Dorsolateral prefrontal cortex (tissue), 120 donors: ENCODE measurements at regions of chr3 and their contacts with region 1.

Region 1: GRCh38 chr3:180989291-180990163 is at the start of gene DNAJC19:
- DNase-seq: peak; percentile 78 to 96 (median 94)
- H3K4me3 ChIP-seq: peak within 1 kb of the TSS; percentile 49 to 98 (median 88)
- H3K27ac ChIP-seq: peak within 1 kb of the TSS; percentile 13 to 95 (median 86)
- H3K27me3 ChIP-seq: no peaks in the 10 kb centered on the region
- CTCF ChIP-seq: peak in 27 of 56 donors; percentile 6 to 57 (median 17)
- total RNA-seq, gene DNAJC19: 26.3 to 63.9 (median 46.2) TPM

Region 2: DNA sequence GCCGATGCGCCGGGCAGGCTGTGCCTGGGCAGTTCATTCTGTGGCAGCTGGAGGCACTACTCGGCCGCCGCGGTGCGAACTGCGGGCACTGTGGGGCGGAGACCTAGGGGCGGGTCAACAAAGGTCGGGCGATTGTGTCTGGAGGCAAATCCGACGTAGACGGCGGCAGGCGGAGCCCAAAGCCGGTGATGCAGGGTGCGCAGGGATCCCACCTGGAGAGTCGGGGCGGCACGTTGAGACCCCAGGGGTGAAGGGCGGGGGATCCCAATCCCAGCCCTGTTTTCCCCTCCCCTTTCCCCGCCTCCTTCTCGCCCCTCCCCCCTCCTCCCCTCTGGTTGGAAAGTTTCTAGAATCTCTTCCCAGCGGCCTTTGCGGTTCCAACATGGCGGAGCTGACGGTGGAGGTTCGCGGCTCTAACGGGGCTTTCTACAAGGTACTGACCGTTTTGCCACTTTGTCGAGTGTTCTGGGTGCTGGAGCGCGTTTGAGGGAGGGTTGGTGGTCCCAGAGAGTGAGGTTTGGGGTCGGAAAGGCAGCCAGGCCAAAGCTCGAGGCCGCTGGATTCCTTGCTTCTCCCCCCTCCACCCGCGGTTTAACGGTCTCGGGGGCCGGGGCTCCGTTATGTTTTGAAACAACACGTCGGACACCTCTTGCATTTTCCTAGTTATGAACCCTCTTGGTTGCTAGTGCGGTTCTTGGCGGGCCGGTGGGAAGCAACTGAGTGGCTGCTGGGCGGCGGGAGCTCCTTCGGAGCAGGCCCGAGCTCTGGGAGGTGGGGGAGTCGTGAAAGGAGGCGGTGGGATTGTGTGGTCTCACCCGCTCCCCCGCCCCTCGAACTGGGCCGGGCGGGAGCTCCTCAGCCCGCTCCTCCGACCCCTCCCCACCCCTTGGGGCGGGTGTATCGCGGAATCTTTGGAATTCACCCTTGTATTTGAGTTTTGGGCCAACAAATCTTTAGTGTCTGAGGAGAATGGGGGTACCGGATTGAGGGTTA is 76.9 kb before region 1 on chr3 and contains the start of gene FXR1:
- intact Hi-C with region 1: loop called (anchors 2 to 5 kb)
- DNase-seq: peak; percentile 80 to 94 (median 90)
- H3K4me3 ChIP-seq: peak within 1 kb of the TSS; percentile 76 to 99 (median 95)
- H3K27ac ChIP-seq: peak within 1 kb of the TSS; percentile 91 to 99 (median 98)
- H3K27me3 ChIP-seq: no peaks in the 10 kb centered on the region
- CTCF ChIP-seq: peak; percentile 53 to 93 (median 80)
- total RNA-seq, gene FXR1: 110 to 275 (median 151) TPM